ENCODE measurements at regions of chr5 and their contacts with region 1.

Region 1: DNA sequence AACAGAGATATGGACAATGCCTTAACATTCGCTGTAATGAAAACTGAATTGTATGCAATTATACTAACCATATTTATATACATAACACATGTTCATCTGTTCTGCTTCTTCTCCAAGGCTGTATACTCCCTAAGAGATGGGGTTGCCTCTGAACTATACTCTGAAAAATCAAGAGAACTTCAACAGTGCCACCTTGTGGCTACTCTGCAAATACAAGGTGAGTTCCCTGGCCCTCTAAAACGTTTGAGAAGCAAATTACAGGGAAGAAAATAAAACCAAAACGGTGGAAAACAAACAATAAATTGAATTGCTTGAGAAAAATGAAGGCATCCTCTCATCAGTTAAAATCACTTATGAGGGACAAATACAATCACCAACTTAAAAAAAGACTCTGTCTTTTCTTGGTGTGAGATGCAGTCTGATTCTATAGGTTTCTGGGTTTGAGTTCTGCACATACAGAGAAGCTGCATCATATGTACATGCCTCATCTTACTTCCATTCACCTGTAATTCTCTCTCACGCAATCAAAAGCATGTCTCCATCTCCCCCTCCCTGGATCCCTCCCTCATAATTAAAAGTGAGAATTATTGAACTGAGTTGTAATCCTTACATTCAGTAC is 98.6 kb downstream of the FBXW11 start:
- DNase-seq: peak; percentile 68
- ATAC-seq: peak; percentile 81
- H3K4me3 Mint-ChIP-seq: no peak overlapping the region
- H3K27ac Mint-ChIP-seq: peak overlapping the region; percentile 64
- H3K4me1 Mint-ChIP-seq: peaks cover 57% of the 10 kb centered on the region
- H3K27me3 Mint-ChIP-seq: no peaks in the 10 kb centered on the region

Region 2: GRCh38 chr5:171418316-171418981 is 489.4 kb before region 1 on chr5:
- CTCF ChIA-PET with region 1: interaction called, 9 read pairs
- POLR2A ChIA-PET with region 1: no interaction called
- intact Hi-C with region 1: loop called (anchors 1 kb)
- DNase-seq: peak; percentile 80
- ATAC-seq: peak; percentile 63
- H3K4me3 Mint-ChIP-seq: peak overlapping the region; percentile 58
- H3K27ac Mint-ChIP-seq: no peak overlapping the region
- H3K4me1 Mint-ChIP-seq: peaks cover 12% of the 10 kb centered on the region
- H3K27me3 Mint-ChIP-seq: peaks cover 22% of the 10 kb centered on the region

Region 3: DNA sequence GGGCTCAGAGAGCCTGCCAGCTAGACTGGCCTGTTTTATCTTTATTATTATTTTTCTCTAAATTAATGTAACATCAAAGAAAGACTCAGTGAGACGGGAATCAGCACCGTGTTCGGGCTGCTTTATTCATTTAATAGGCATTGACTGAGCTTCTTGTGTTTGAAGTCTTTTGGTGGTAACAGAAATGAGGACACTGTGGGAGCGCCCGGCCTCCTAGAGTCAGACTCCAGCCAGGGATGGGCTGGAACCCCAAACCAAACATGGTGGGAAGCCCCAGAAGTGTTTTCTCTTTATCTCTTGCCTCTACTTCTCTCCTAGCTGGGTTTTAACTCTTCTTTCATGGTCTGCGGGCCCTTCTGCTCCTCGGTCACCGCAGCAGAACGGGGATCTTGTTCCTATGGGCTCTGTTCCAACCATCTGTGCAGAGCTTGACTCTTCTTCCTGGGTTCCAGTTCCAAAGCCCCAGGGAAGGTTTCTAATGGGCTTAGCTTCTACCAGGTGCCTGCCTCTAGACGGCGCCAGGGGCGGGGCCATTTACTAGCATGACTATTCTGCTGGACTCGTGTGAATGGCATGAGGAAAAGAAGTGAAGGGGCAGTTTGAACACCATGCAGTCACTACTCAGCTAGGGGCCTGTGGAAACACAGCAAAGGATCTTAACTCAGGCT is 364.6 kb before region 1 on chr5:
- CTCF ChIA-PET with region 1: no interaction called
- POLR2A ChIA-PET with region 1: no interaction called
- intact Hi-C with region 1: no loop called
- DNase-seq: no peak
- ATAC-seq: no peak
- H3K4me3 Mint-ChIP-seq: no peak overlapping the region
- H3K27ac Mint-ChIP-seq: no peak overlapping the region
- H3K4me1 Mint-ChIP-seq: no peaks in the 10 kb centered on the region
- H3K27me3 Mint-ChIP-seq: peaks cover 19% of the 10 kb centered on the region

Region 4: DNA sequence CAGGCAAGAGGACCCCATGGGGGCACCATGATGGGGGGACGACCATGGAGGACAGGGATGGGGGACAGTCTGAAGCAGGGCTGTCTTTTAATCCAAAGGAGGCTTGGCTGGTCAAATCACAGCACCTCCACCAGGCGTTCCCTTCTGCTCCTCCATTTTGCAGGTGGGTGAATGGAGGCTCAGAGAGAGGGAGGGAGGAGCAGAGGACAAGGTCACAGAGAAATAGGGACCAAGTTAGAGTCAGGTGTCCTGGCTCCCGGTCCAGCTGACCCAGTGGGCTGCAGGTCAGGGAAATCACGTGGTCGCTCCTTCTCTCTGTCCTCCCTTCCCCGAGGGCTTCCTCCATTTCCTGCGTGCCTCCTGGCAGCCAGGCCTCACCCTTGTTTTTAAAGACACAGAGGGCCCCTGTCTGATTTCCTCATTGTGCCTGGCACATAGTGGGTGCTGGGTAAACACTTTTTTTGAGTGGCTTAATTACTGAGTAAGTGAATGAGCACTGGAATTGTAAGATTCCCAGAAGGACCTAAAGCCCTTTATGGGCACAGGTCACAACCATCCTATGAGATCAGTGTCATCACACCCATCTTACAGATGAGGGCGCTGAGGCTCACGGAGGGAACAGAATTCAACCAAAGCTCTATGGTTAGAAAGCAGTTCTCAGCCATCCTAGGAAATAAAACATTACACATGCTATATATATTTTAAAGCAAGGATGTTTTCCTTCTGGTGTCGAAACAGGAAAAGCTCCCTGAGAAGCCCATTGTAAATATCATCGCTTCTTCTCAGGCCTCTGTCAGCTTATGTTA is 278.4 kb before region 1 on chr5:
- CTCF ChIA-PET with region 1: no interaction called
- POLR2A ChIA-PET with region 1: no interaction called
- intact Hi-C with region 1: loop called in 1 of 2 experiments (anchors 1 kb)
- DNase-seq: peak; percentile 19
- ATAC-seq: no peak
- H3K4me3 Mint-ChIP-seq: no peak overlapping the region
- H3K27ac Mint-ChIP-seq: no peak overlapping the region
- H3K4me1 Mint-ChIP-seq: no peaks in the 10 kb centered on the region
- H3K27me3 Mint-ChIP-seq: peaks cover 20% of the 10 kb centered on the region

Region 5: DNA sequence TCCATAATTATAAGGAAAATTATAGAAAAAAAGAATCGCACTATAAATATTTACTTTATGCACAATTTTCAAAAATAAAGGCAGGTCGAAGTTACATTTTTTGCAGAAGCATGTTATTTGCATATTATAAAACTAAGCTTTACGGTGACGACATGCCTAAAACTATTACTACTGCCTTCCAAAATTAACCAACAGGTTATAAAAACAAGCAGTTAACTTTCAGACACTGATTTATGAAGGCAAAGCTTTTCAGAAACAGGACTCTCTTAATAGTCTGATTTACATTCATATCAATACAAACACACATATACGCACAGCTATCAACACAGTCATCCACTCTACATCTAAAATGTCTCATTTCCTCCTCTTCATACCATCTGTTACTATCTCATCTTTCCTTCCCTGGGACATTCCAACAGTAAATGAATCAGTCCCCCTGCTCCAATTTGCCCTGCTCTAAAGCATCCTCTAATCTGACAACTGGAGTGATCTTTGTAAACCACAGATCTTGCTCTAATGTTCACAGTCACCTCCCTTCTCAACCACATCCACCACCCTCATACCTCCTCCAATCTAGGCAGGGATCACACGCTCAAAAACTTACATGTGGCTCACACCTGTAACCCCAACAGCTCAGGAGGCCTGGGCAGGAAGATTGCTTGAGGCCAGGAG is 77.0 kb after region 1 on chr5:
- CTCF ChIA-PET with region 1: interaction called, 11 read pairs
- POLR2A ChIA-PET with region 1: no interaction called
- intact Hi-C with region 1: loop called (anchors 1 kb)
- DNase-seq: peak; percentile 64
- ATAC-seq: peak; percentile 83
- H3K4me3 Mint-ChIP-seq: no peak overlapping the region
- H3K27ac Mint-ChIP-seq: peak overlapping the region; percentile 56
- H3K4me1 Mint-ChIP-seq: peaks cover 48% of the 10 kb centered on the region
- H3K27me3 Mint-ChIP-seq: no peaks in the 10 kb centered on the region

Region 6: DNA sequence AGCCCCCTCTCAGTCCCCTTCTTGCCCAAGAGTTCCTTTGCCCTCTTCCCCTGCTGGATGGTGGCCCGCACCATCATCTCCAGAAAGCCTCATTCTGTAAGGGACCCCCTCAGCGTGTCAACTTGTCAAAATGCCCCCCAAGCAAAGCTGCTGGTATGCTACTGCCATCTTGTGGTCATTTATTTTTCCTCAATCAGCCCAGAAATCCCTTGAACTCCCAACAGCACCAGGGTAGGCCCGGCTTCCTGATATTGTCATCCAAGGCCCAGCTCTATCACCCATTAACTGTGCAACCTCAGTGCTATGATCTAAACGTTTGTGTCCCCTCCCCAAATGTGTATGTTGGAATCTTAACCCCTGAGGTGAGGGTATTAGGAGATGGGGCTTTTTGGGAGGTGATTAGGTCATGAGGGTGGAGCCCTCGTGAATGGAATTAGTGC is 151.8 kb after region 1 on chr5:
- CTCF ChIA-PET with region 1: interaction called, 31 read pairs
- POLR2A ChIA-PET with region 1: no interaction called
- intact Hi-C with region 1: loop called in 1 of 2 experiments (anchors 1 kb)
- DNase-seq: no peak
- ATAC-seq: no peak
- H3K4me3 Mint-ChIP-seq: no peak overlapping the region
- H3K27ac Mint-ChIP-seq: no peak overlapping the region
- H3K4me1 Mint-ChIP-seq: peaks cover 31% of the 10 kb centered on the region
- H3K27me3 Mint-ChIP-seq: no peaks in the 10 kb centered on the region

Region 7: GRCh38 chr5:172403189-172403796 is 495.5 kb after region 1 on chr5:
- CTCF ChIA-PET with region 1: no interaction called
- POLR2A ChIA-PET with region 1: no interaction called
- intact Hi-C with region 1: no loop called
- DNase-seq: no peak
- ATAC-seq: no peak
- H3K4me3 Mint-ChIP-seq: no peak overlapping the region
- H3K27ac Mint-ChIP-seq: no peak overlapping the region
- H3K4me1 Mint-ChIP-seq: no peaks in the 10 kb centered on the region
- H3K27me3 Mint-ChIP-seq: peaks cover 5% of the 10 kb centered on the region